AG04449 (cell line): ENCODE measurements at regions of chr9 and their contacts with region 1.

Region 1: DNA sequence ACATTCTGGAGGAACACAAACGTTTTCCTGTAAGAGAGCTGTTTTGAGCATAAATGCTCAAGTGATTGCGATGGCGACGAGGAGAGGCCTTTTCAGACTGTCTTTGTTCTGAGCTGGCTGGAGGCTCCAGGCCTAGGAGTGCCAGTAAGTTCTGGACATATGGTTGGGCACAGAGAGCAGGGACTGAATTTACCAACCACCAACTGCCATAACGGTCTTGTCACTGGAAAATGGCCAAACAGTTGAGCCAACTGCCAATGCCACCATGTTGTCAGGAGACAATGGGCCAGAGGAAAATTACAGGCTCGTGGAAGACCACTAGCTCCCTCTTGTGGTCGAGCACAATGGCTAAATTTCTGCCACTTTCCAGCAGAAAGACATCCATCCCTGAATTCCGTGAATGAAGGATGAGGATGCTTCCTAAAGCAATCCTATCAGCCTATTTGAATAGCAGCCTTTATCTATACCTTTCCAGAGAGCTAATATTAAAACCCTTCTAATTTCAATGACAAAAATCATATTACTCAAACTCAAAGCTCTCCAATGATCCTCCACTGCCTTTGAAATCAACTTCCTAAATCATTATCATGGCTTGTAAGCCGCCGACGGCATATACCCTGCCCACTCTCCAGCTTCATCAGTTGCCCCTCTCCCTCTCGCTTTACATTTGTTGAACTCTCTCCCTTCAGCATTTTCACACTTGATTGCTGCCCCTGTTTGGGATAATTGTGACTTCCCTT is 66.9 kb upstream of the GLIS3 start:
- DNase-seq: no peak
- H3K4me3 ChIP-seq: no peak overlapping the region
- CTCF ChIP-seq: peak; percentile 73

Region 2: DNA sequence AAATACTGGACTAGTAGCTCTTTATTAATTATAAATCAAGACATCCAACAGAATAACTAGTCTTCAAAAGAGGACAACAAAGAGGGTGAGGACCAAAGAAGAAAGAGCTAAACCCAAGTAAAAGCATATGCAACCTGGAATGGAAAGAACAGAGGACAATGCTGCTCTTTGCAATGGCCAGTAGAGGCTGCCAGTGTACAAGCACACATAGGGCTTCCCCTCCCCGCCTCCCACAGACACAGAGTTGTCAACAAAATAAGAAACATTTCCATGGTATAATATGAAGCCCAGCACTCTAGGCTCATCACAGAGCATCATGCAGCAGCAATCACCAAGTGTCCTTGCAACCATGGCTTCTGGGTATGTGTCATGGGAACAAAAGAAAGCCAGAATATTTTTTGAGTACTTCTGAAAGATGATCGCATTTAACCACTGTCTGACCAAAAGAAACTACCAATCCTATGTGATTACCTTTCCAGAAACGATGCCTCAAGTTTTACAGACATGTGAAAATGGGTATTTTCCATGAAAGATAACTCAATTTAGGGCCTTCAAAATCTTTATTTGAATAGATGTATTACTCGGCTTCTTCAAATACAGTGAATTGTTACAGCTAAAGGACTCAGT is 899.1 kb before region 1 on chr9:
- CTCF ChIA-PET with region 1: interaction called, 12 read pairs
- POLR2A ChIA-PET with region 1: no interaction called
- DNase-seq: peak; percentile 17
- H3K4me3 ChIP-seq: no peak overlapping the region
- CTCF ChIP-seq: peak; percentile 96

Region 3: GRCh38 chr9:4297151-4297785 is 69.5 kb before region 1 on chr9:
- CTCF ChIA-PET with region 1: interaction called, 21 read pairs
- POLR2A ChIA-PET with region 1: no interaction called
- DNase-seq: no peak
- H3K4me3 ChIP-seq: peak overlapping the region; percentile 84
- CTCF ChIP-seq: peak; percentile 58

Region 4: DNA sequence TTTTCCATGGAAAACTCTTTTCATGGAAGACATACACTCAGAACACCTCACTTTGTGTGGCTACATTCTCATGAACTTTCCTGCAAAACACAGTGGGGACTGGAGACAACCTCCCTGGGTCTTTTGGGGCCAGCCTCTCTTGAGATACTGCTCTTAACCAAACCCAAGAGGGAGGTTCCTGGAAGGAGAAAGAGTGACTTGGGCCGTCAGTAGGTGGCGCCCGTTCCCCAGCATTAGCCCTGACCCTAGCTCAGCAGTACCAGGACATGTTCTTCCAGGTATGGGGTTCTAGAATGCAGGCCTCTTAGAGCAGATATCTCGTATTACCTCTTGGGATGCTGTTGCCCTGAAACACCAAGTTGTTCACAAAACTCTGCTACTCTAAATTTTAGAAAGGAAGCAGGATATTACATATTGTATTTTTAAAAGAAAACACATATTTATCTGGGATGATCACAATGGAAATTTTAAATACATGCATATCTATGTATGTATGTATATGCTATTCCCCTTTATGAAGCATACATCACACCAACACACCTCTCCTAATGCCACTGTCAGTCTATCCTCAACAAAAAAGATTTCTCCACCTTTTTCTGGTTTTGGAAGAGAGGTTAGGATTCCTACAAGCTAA is 51.1 kb before region 1 on chr9:
- CTCF ChIA-PET with region 1: interaction called, 257 read pairs
- POLR2A ChIA-PET with region 1: no interaction called
- DNase-seq: no peak
- H3K4me3 ChIP-seq: no peak overlapping the region
- CTCF ChIP-seq: peak; percentile 96

Region 5: DNA sequence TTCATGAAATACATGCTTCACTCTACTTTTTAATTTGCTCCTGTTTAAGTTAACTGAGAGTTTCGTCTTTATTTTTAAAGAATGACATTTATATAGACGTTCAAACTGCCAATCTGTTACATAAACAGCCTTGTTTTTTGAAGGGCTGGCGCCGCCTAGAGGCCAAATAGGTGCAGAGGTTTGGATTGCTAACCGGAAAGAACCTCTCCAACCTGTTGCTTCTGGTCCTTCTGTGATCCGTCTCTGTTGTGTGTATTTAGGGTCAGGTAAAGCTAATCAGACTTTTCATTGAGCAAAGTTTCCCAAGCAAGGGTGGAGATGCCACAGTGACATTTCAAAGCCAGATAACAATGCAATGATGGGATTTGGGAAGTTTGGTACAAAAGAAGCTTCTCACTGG is 27.4 kb before region 1 on chr9:
- CTCF ChIA-PET with region 1: interaction called, 57 read pairs
- POLR2A ChIA-PET with region 1: no interaction called
- DNase-seq: no peak
- H3K4me3 ChIP-seq: no peak overlapping the region
- CTCF ChIP-seq: peak; percentile 76